ENCODE measurements at regions of chr13 and their contacts with region 1.

Region 1: GRCh38 chr13:21603531-21604448 is at the start of gene MICU2:
- DNase-seq: peak; percentile 77 to 93 (median 82)
- ATAC-seq: peak; percentile 99
- H3K4me3 ChIP-seq: peak within 1 kb of the TSS; percentile 76
- H3K27ac ChIP-seq: peak within 1 kb of the TSS; percentile 92
- H3K4me1 ChIP-seq: peaks cover 6 to 8% of the 10 kb centered on the region in 2 experiments; a peak in 4 of 5 replicates
- H3K27me3 ChIP-seq: no peaks in the 10 kb centered on the region
- CTCF ChIP-seq: peak in 1 of 3 experiments; percentile 9; a peak in 1 of 6 replicates
- EP300 ChIP-seq: no peak
- POLR2A ChIP-seq: peak; percentile 98
- RAD21 ChIP-seq: no peak
- polyA plus RNA-seq, gene MICU2: 9.1 to 9.8 TPM

Region 2: GRCh38 chr13:21528621-21529020 is 75.2 kb before region 1 on chr13:
- CTCF ChIA-PET with region 1: no interaction called
- POLR2A ChIA-PET with region 1: no interaction called
- in situ Hi-C with region 1: no loop called
- intact Hi-C with region 1: loop called (anchors 10 kb)
- DNase-seq: no peak
- ATAC-seq: no peak
- H3K4me3 ChIP-seq: no peak overlapping the region
- H3K27ac ChIP-seq: no peak overlapping the region
- H3K4me1 ChIP-seq: peaks cover 5 to 14% of the 10 kb centered on the region in 2 experiments; a peak in 4 of 5 replicates
- H3K27me3 ChIP-seq: no peaks in the 10 kb centered on the region
- CTCF ChIP-seq: no peak
- EP300 ChIP-seq: no peak
- POLR2A ChIP-seq: no peak
- RAD21 ChIP-seq: no peak

Region 3: GRCh38 chr13:21576426-21576825 is 27.4 kb before region 1 on chr13:
- CTCF ChIA-PET with region 1: no interaction called
- POLR2A ChIA-PET with region 1: interaction called, 4 read pairs
- in situ Hi-C with region 1: no loop called
- intact Hi-C with region 1: loop called (anchors 2 kb)
- DNase-seq: peak; percentile 12 to 49 (median 14)
- ATAC-seq: peak; percentile 78
- H3K4me3 ChIP-seq: no peak overlapping the region
- H3K27ac ChIP-seq: peak overlapping the region; percentile 72; the same call in 2 of the 3 replicates
- H3K4me1 ChIP-seq: peaks cover 0 to 20% of the 10 kb centered on the region in 2 experiments; a peak in 3 of 5 replicates
- H3K27me3 ChIP-seq: no peaks in the 10 kb centered on the region
- CTCF ChIP-seq: no peak
- EP300 ChIP-seq: no peak
- POLR2A ChIP-seq: no peak
- RAD21 ChIP-seq: no peak

Region 4: GRCh38 chr13:21759463-21759862 is 155.7 kb after region 1 on chr13:
- CTCF ChIA-PET with region 1: no interaction called
- POLR2A ChIA-PET with region 1: no interaction called
- in situ Hi-C with region 1: no loop called
- intact Hi-C with region 1: no loop called
- DNase-seq: no peak
- ATAC-seq: no peak
- H3K4me3 ChIP-seq: no peak overlapping the region
- H3K27ac ChIP-seq: no peak overlapping the region
- H3K4me1 ChIP-seq: no peaks in the 10 kb centered on the region
- H3K27me3 ChIP-seq: peaks cover 0 to 3% of the 10 kb centered on the region in 2 experiments; a peak in 1 of 5 replicates
- CTCF ChIP-seq: no peak
- EP300 ChIP-seq: no peak
- POLR2A ChIP-seq: no peak
- RAD21 ChIP-seq: no peak